Activated T-helper 1 cell treated with anti-CD3 and anti-CD28 coated beads, Interleukin-12 subunit alpha, Interleukin-12 subunit beta, Interleukin-2, Interleukin-4 antibody, amounts not matched to agents 30 ng/mL and 10 ng/mL and 1 ng/mL, durations not matched to agents 14 hours and 24 hours and 36 hours (primary cell): ENCODE measurements at regions of chr14 and their contacts with region 1.

Region 1: DNA sequence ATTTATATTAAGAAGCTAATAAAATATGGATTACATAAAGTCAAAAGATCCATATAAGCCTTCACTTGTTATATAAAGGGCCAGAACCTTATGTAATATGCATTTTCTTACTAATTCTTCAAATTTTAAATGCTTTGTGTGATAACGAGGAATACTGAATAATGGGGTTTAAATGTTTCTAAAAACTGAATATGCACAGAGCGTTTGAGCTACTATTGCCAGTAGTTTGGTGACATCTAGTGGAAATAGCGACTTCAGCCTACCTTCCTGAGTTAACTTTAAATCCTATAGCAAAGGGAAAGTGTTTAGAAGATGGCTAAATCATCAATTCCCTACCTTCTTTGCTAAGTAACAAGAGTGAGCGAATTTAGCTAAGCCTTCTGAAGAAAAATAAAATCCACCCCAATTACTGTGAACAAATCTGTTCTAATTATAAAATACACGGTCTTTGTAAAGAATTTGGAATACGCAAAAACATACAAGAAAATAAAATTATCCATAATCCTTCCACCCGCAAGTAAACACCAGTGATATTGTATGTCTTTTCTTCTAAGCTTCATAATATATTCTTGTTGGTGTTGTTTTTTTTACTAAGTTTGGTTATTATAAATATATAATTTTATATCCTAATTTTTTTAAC is 115.5 kb upstream of the G2E3 start:
- DNase-seq: no peak
- H3K4me3 Mint-ChIP-seq: no peak overlapping the region
- H3K27ac Mint-ChIP-seq: no peak overlapping the region
- H3K4me1 Mint-ChIP-seq: no peaks in the 10 kb centered on the region
- H3K27me3 Mint-ChIP-seq: peaks cover 1% of the 10 kb centered on the region

Region 2: DNA sequence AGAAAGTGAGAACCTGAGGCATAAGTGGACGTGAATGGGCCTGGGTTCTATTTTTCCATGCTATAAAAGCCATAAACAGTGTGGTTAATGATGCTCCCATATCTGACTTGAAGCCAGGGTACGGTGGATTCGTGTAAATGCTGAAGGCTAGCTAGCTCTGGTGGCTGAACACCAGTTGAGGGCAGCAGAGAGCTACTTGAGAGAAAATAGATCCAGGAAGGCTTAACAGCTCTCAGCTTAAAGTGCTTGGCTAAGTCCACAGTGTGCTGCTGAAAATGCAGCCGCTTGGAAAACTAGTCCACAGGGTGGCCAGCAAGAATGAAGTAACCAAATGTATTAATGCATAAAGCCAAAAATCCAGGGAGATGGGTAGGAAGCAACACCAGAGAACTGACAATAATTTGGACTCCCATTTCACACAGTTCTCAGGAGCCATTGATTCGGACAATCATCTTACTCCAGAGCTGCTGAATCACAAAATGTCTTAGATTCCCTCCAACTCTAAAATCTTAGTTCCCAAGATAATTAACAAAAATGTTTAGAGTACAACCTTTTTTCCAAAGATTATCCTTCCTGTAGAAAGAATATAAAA is 1691.9 kb before region 1 on chr14:
- intact Hi-C with region 1: loop called (anchors 10 kb)
- DNase-seq: no peak
- H3K4me3 Mint-ChIP-seq: no peak overlapping the region
- H3K27ac Mint-ChIP-seq: no peak overlapping the region
- H3K4me1 Mint-ChIP-seq: no peaks in the 10 kb centered on the region
- H3K27me3 Mint-ChIP-seq: peaks cover 21% of the 10 kb centered on the region

Region 3: DNA sequence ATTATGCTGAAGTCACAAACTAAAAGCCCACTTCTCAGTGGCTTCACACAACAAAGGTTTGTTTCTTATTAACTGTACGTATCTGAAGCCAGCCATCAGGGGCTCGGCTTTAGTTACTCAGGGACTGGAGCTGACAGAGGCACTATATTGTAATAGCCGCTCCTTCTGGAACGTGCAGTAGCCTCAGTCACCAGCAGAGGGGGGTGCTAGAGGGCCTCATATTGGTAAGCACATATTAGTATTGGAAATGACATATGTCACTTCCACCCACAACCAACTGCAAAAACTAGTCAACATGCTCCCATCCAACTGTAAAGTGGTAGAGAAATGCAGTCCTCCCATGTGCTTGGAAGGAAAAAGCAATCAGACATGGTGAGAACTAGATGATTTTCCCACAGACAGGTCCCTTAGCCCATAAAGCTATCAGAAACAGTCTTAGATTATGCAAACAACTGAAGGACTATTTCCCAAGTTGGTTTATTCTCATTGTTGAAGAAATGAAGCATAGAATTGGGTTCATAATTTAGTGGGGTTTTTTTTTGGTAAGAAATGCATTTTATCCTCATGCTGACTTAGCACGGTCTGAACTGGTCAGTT is 68.1 kb before region 1 on chr14:
- intact Hi-C with region 1: loop called (anchors 1 kb)
- DNase-seq: peak; percentile 35
- H3K4me3 Mint-ChIP-seq: no peak overlapping the region
- H3K27ac Mint-ChIP-seq: no peak overlapping the region
- H3K4me1 Mint-ChIP-seq: no peaks in the 10 kb centered on the region
- H3K27me3 Mint-ChIP-seq: peaks cover 5% of the 10 kb centered on the region